HCT116 (cell line): ENCODE measurements at regions of chr16 and their contacts with region 1.

Region 1: GRCh38 chr16:21277927-21278706 is at the start of gene CRYM:
- DNase-seq: no peak
- ATAC-seq: peak; percentile 98
- H3K4me3 ChIP-seq: peak within 1 kb of the TSS; percentile 44 to 67
- H3K27ac ChIP-seq: no peak within 1 kb of the TSS
- H3K4me1 ChIP-seq: peaks cover 0 to 18% of the 10 kb centered on the region in 2 experiments; a peak in 1 of 4 replicates
- H3K27me3 ChIP-seq: no peaks in the 10 kb centered on the region; the same call in 1 of the 2 replicates
- CTCF ChIP-seq: peak; percentile 47 to 88 (median 88); a peak in 5 of 6 replicates
- POLR2A ChIP-seq: no peak
- RAD21 ChIP-seq: peak; percentile 48
- total RNA-seq, gene CRYM: 4.9 TPM

Region 2: GRCh38 chr16:21126518-21126917 is 151.6 kb before region 1 on chr16:
- CTCF ChIA-PET with region 1: no interaction called
- POLR2A ChIA-PET with region 1: no interaction called
- RAD21 ChIA-PET with region 1: no interaction called
- intact Hi-C with region 1: no loop called
- DNase-seq: no peak
- ATAC-seq: no peak
- H3K4me3 ChIP-seq: no peak overlapping the region
- H3K27ac ChIP-seq: no peak overlapping the region
- H3K4me1 ChIP-seq: no peaks in the 10 kb centered on the region
- H3K27me3 ChIP-seq: peaks cover 6% of the 10 kb centered on the region; the same call in 1 of the 2 replicates
- CTCF ChIP-seq: no peak
- POLR2A ChIP-seq: no peak
- RAD21 ChIP-seq: no peak

Region 3: GRCh38 chr16:21184834-21185233 is 93.3 kb before region 1 on chr16:
- CTCF ChIA-PET with region 1: interaction called, 22 read pairs
- POLR2A ChIA-PET with region 1: no interaction called
- RAD21 ChIA-PET with region 1: interaction called in 1 of 2 experiments, 3 read pairs
- intact Hi-C with region 1: loop called (anchors 1 kb)
- DNase-seq: no peak
- ATAC-seq: no peak
- H3K4me3 ChIP-seq: no peak overlapping the region
- H3K27ac ChIP-seq: no peak overlapping the region
- H3K4me1 ChIP-seq: peaks cover 8 to 17% of the 10 kb centered on the region in 2 experiments; a peak in 3 of 4 replicates
- H3K27me3 ChIP-seq: no peaks in the 10 kb centered on the region
- CTCF ChIP-seq: no peak
- POLR2A ChIP-seq: no peak
- RAD21 ChIP-seq: no peak

Region 4: GRCh38 chr16:21190599-21190998 is 87.5 kb before region 1 on chr16:
- CTCF ChIA-PET with region 1: interaction called, 22 read pairs
- POLR2A ChIA-PET with region 1: no interaction called
- RAD21 ChIA-PET with region 1: interaction called in 1 of 2 experiments, 3 read pairs
- intact Hi-C with region 1: loop called (anchors 1 kb)
- DNase-seq: no peak
- ATAC-seq: no peak
- H3K4me3 ChIP-seq: no peak overlapping the region
- H3K27ac ChIP-seq: no peak overlapping the region
- H3K4me1 ChIP-seq: peaks cover 8 to 17% of the 10 kb centered on the region in 2 experiments; a peak in 3 of 4 replicates
- H3K27me3 ChIP-seq: no peaks in the 10 kb centered on the region
- CTCF ChIP-seq: no peak
- POLR2A ChIP-seq: no peak
- RAD21 ChIP-seq: no peak

Region 5: GRCh38 chr16:21321736-21322135 is 43.6 kb after region 1 on chr16:
- CTCF ChIA-PET with region 1: no interaction called
- POLR2A ChIA-PET with region 1: no interaction called
- RAD21 ChIA-PET with region 1: no interaction called
- intact Hi-C with region 1: no loop called
- DNase-seq: no peak
- ATAC-seq: no peak
- H3K4me3 ChIP-seq: no peak overlapping the region
- H3K27ac ChIP-seq: no peak overlapping the region
- H3K4me1 ChIP-seq: no peaks in the 10 kb centered on the region
- H3K27me3 ChIP-seq: no peaks in the 10 kb centered on the region
- CTCF ChIP-seq: no peak
- POLR2A ChIP-seq: no peak
- RAD21 ChIP-seq: no peak

Region 6: DNA sequence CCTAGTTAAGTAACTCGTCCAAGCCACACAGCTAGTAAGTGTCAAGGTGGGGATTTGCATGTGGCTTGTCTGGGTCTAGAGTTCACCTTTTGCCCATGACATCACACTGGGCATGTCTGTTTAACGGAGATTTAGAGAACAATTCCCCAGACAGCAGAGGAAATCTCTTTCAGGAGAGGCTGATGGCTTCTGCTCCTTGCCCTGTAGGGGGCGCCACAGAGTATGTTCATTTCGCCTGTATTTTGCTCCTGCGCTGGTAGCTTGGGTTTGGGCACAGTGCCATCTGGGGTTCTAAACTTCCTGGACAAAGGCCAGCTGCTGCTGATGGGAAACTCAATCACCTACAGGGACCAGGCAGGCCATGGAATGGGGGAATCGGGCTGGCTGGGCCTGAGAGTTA is 406.1 kb after region 1 on chr16:
- CTCF ChIA-PET with region 1: no interaction called
- POLR2A ChIA-PET with region 1: no interaction called
- RAD21 ChIA-PET with region 1: no interaction called
- intact Hi-C with region 1: no loop called
- DNase-seq: peak; percentile 4
- ATAC-seq: peak; percentile 44; the same call in 1 of the 2 replicates
- H3K4me3 ChIP-seq: no peak overlapping the region
- H3K27ac ChIP-seq: no peak overlapping the region
- H3K4me1 ChIP-seq: no peaks in the 10 kb centered on the region
- H3K27me3 ChIP-seq: no peaks in the 10 kb centered on the region
- CTCF ChIP-seq: peak; percentile 8 to 60 (median 59); a peak in 4 of 6 replicates
- POLR2A ChIP-seq: no peak
- RAD21 ChIP-seq: no peak